ENCODE measurements at regions of chr20 and their contacts with region 1.

Region 1: GRCh38 chr20:49713753-49714712 is at the start of gene B4GALT5:
- DNase-seq: no peak
- H3K4me3 Mint-ChIP-seq: peak within 1 kb of the TSS; percentile 87
- H3K27ac Mint-ChIP-seq: peak within 1 kb of the TSS; percentile 94
- H3K4me1 Mint-ChIP-seq: peaks cover 30% of the 10 kb centered on the region
- H3K27me3 Mint-ChIP-seq: no peaks in the 10 kb centered on the region
- CTCF ChIP-seq: no peak
- total RNA-seq, gene B4GALT5: 17.1 and 19.7 TPM in 2 replicates

Region 2: DNA sequence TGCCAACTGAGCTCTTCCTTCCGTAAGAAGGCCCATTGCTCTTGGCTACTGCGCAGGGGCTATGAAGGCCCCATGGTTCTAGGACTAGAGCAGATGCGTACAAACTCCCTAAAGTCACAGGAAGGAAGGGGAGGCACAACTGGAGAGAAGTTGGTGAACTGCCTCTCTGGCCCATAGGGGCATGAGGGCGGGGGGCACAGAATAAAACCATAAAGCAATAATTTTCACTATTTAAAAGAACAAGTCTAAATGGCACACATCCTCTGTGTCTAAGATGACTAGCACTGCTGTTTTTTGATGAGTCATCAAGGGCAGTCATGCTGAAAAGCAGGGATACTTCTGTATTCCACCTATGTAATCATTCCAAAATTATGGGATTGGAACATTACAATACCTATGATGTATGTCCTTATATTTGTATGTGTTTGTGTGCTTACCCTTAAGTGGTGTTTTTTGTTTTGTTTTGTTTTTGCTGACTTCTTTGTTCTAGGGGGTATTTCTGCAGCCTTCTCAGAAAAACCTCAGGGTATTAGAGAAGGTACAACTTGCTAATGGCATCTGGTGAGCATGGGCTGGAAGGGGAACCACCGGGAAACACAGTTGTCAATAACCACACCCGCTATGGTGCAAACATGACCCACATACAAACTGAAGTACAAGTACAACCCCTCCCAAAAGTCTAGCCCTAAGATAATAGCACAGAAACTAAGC is 37.3 kb before region 1 on chr20:
- CTCF ChIA-PET with region 1: interaction called, 8 read pairs
- POLR2A ChIA-PET with region 1: interaction called, 14 read pairs
- intact Hi-C with region 1: no loop called
- DNase-seq: peak; percentile 68
- H3K4me3 Mint-ChIP-seq: peak overlapping the region; percentile 22
- H3K27ac Mint-ChIP-seq: peak overlapping the region; percentile 66
- H3K4me1 Mint-ChIP-seq: peaks cover 69% of the 10 kb centered on the region
- H3K27me3 Mint-ChIP-seq: no peaks in the 10 kb centered on the region
- CTCF ChIP-seq: no peak

Region 3: DNA sequence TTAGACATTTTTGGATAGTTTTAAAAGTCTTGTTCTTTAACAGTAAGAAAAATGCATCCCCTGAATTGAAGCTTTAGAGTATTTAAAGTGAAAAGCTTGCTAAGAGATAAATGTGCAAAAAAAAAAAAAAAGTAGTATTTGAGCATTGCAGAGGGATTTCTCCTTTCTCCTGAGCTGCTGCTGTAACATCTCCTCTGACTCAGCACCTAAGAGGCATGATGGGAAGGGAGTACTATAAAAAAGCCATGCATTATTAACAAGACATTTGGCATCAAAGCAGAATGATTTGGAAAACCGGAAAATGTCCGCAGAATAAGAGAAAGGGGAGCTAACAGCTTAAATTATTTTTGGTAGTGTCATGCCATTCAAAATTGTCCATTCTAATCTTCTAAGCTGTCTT is 28.2 kb before region 1 on chr20:
- CTCF ChIA-PET with region 1: interaction called, 4 read pairs
- POLR2A ChIA-PET with region 1: interaction called, 71 read pairs
- intact Hi-C with region 1: no loop called
- DNase-seq: peak; percentile 53
- H3K4me3 Mint-ChIP-seq: no peak overlapping the region
- H3K27ac Mint-ChIP-seq: no peak overlapping the region
- H3K4me1 Mint-ChIP-seq: peaks cover 47% of the 10 kb centered on the region
- H3K27me3 Mint-ChIP-seq: no peaks in the 10 kb centered on the region
- CTCF ChIP-seq: no peak

Region 4: GRCh38 chr20:49690899-49691620 is 23.0 kb before region 1 on chr20:
- CTCF ChIA-PET with region 1: interaction called, 4 read pairs
- POLR2A ChIA-PET with region 1: interaction called, 71 read pairs
- intact Hi-C with region 1: no loop called
- DNase-seq: peak; percentile 75
- H3K4me3 Mint-ChIP-seq: no peak overlapping the region
- H3K27ac Mint-ChIP-seq: peak overlapping the region; percentile 81
- H3K4me1 Mint-ChIP-seq: peaks cover 48% of the 10 kb centered on the region
- H3K27me3 Mint-ChIP-seq: no peaks in the 10 kb centered on the region
- CTCF ChIP-seq: no peak

Region 5: GRCh38 chr20:49699200-49699992 is 14.6 kb before region 1 on chr20:
- CTCF ChIA-PET with region 1: no interaction called
- POLR2A ChIA-PET with region 1: interaction called, 71 read pairs
- intact Hi-C with region 1: no loop called
- DNase-seq: peak; percentile 64
- H3K4me3 Mint-ChIP-seq: no peak overlapping the region
- H3K27ac Mint-ChIP-seq: peak overlapping the region; percentile 50
- H3K4me1 Mint-ChIP-seq: peaks cover 32% of the 10 kb centered on the region
- H3K27me3 Mint-ChIP-seq: no peaks in the 10 kb centered on the region
- CTCF ChIP-seq: no peak

Region 6: GRCh38 chr20:49724408-49725223 is 10.6 kb after region 1 on chr20:
- CTCF ChIA-PET with region 1: no interaction called
- POLR2A ChIA-PET with region 1: interaction called, 13 read pairs
- intact Hi-C with region 1: no loop called
- DNase-seq: no peak
- H3K4me3 Mint-ChIP-seq: no peak overlapping the region
- H3K27ac Mint-ChIP-seq: no peak overlapping the region
- H3K4me1 Mint-ChIP-seq: no peaks in the 10 kb centered on the region
- H3K27me3 Mint-ChIP-seq: no peaks in the 10 kb centered on the region
- CTCF ChIP-seq: no peak

Region 7: DNA sequence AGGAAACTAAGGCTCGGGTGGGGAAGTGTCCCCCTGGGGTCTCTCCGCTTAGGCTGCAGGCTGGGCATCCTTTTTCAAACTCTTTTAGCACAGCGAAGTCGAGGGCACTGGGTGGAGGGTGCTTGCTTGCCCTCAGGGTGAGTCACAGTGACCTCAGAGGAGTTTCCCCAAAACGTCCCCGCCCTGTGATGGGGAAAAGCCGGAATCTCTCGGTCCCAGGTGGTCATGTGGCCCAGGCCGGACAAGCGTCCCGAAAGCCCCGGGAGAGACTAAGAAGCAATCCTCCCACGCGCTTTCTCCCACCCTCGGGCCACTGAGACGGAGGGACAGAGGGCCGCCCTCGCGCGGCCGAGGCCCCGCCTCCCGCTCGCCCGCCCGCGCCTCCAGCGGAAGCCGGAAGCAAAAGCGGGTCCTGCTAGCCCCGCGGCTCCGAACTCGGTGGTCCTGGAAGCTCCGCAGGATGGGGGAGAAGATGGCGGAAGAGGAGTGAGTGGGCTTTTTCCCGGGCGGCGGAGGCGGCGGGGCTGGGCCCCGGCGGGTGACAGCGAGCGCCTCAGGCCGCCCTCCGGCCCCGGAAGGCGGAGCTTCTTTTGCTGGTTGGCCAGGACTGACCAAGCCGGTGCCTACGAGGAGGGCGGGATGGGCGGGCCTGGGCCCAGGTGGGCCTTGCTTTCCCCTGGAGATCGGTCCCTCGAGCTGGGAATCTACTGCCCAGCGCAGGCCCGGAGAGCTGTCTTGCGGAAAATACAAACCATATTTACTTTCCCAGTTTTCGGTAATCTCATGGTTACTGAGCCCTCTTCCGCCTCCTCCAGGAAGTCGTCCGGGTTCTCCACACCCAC is 98.7 kb after region 1 on chr20 and contains the start of gene SLC9A8:
- CTCF ChIA-PET with region 1: interaction called, 3 read pairs
- POLR2A ChIA-PET with region 1: interaction called, 24 read pairs
- intact Hi-C with region 1: loop called (anchors 5 kb)
- DNase-seq: peak; percentile 95
- H3K4me3 Mint-ChIP-seq: peak within 1 kb of the TSS; percentile 87
- H3K27ac Mint-ChIP-seq: peak within 1 kb of the TSS; percentile 71
- H3K4me1 Mint-ChIP-seq: peaks cover 32% of the 10 kb centered on the region
- H3K27me3 Mint-ChIP-seq: no peaks in the 10 kb centered on the region
- CTCF ChIP-seq: no peak
- total RNA-seq, gene SLC9A8: 14.6 and 16.5 TPM in 2 replicates

Region 8: DNA sequence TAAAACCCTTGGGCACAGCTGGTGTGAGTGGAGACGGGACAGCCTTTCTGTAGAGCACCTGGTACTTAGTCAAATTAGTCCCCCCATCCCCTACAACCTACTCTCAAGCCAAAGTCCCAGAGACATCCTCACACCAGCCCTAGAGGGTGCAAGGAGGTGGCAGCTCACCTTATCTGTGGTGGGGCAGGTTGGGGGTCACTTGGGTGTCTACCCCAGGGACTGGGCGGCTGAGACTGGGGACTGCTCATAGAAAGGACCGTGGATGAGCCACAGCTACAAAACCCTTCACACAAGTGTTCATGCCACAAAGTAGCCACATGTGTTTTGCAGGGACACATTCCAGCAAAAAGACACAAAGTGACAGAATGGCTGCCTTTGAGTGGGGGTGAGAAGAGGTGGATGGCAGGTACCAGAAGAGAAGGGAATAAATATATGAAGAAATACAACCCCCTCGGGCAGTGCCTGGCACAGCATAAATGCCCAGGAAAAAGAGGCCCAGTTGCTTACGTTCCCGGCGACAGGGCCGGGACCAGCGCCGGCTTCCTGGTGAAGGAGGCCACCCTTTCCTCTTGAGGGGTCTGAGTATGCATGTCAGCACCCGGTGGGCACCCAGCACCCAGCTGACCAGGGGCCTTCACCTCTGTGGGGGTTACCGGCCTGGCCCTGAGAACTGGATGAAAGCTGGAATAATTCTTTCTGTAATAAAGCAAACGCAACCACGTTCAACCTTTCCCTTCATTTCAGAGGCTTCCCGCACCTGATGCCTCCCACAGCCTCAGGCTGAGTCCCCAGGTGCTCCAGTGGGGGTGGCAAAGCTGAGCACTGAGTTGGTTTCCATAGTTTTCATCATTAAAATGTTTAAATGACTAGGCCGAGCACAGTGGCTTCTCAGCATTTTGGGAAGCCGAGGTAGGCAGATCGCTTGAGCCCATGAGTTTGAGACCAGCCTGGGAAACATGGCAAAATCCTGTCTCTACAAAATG is 462.2 kb after region 1 on chr20:
- CTCF ChIA-PET with region 1: no interaction called
- POLR2A ChIA-PET with region 1: no interaction called
- intact Hi-C with region 1: no loop called
- DNase-seq: no peak
- H3K4me3 Mint-ChIP-seq: no peak overlapping the region
- H3K27ac Mint-ChIP-seq: no peak overlapping the region
- H3K4me1 Mint-ChIP-seq: peaks cover 5% of the 10 kb centered on the region
- H3K27me3 Mint-ChIP-seq: no peaks in the 10 kb centered on the region
- CTCF ChIP-seq: no peak

Measured in MCF 10A (cell line).